ENCODE measurements at regions of chr11 and their contacts with region 1.

Region 1: GRCh38 chr11:65418711-65419459 is 3.7 kb upstream of the NEAT1 start:
- DNase-seq: peak; percentile 75

Region 2: GRCh38 chr11:65382033-65382807 is 36.7 kb before region 1 on chr11 and contains the start of gene SLC25A45:
- CTCF ChIA-PET with region 1: interaction called, 8 read pairs
- POLR2A ChIA-PET with region 1: interaction called, 264 read pairs
- DNase-seq: peak; percentile 78

Region 3: DNA sequence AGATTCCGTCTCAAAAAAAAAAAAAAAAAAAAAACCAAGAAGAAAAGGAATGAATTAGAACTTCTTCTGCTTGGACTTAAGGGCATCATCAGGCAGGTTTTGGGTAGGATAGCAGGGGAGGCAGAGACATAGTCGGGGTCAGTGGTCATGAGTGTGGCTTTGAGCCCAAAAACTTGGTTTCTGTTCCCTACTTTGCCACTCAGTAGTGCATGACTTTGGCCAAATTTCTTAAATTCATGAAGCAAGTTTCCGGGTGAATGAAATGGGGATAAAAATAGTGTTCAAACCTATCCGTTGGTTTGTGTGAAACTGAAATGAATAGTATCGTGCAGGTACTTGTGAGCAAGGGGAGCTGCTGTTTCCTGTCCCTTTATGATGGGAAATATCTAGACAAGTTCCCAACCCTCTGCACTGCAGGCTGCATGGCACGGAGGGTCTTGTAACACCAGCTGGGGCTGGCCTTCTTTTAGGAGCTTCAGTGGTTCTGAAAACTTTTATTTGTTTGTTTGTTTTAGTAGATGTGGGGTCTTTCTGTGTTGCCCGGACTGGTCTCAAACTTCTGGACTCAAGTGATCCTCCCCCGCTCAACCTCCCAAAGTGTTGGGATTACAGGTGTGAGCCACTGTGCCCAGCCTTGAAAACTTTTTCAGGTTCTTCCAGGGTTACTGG is 22.1 kb after region 1 on chr11:
- CTCF ChIA-PET with region 1: interaction called, 7 read pairs
- POLR2A ChIA-PET with region 1: interaction called, 156 read pairs
- DNase-seq: no peak

Region 4: DNA sequence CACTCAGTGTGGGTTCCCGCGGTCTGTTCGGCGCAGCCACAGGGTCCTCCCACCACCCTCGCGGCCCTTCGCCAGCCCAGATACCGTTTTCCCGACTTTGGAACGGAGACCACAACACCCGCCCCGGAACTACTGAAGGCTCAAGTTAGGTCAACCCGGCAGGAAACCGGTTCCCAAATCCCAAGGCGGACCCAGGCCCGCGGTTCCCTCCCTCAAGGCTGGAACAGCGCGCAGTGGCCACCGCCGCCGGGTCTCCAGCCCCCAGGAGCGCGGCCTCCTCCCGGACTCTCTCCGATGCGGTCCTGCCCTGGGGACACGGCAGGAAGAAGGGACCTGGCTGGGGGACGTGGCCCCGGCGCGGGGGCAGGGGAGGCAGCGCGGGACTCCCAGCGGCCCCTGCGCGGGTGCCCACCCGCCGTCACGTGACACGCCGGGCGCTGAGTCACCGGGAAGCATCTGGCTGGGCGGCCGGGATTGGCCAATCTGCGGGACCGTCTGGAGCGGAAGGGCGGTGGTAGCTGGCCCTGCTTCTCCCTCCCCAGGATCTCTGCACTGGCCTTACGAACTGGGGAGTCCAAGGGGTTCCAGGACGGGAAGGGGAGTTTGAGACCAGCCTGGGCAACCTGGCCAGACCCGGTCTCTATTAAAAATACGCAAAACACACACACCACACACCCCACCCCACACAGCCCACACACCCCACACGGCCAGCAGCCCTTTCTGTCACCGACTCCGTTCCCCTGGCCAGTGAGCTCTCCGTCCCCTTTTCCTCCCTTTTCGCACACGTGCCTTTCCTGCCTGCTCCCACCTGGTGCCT is 58.5 kb after region 1 on chr11:
- CTCF ChIA-PET with region 1: interaction called, 40 read pairs
- POLR2A ChIA-PET with region 1: interaction called, 248 read pairs
- DNase-seq: peak; percentile 91

Region 5: DNA sequence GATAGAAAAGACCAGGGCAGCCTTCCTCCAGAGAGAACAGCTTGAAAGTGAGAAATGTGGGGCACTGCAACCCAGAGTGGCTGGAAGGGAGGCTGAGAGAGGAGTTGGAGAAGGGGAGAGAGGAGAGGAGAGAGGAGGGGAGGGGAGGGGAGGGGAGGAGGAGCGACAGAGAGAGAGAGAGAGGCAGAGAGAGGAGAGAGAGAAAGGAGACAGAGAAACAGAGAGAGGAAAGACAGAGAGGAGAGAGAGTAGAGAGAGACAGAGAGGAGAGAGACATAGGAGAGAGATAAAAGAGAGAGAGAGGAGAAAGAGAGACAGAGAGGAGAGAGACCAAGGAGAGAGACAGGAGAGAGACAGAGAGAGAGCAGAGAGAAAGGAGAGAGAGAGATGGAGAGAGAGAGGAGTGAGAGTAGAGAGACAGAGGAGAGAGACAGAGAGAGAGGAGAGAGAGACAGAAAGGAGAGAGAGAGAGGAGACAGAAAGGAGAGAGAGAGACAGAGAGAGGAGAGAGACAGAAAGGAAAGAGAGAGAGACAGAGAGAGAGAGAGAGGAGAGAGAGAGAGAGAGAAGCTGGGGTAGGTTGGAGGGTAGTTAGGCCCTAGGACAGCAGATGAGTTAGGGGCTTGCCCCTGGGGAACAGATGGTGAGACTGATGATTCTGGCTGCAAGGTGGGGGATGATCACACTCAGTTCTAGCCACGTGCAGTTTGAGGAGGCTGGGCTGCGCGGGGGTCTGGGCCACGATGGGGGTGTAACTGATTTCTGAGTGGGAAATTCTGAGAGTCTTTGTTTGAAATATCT is 97.5 kb after region 1 on chr11:
- CTCF ChIA-PET with region 1: no interaction called
- POLR2A ChIA-PET with region 1: interaction called, 1,436 read pairs
- DNase-seq: no peak